ENCODE measurements at regions of chr6 and their contacts with region 1.

Region 1: DNA sequence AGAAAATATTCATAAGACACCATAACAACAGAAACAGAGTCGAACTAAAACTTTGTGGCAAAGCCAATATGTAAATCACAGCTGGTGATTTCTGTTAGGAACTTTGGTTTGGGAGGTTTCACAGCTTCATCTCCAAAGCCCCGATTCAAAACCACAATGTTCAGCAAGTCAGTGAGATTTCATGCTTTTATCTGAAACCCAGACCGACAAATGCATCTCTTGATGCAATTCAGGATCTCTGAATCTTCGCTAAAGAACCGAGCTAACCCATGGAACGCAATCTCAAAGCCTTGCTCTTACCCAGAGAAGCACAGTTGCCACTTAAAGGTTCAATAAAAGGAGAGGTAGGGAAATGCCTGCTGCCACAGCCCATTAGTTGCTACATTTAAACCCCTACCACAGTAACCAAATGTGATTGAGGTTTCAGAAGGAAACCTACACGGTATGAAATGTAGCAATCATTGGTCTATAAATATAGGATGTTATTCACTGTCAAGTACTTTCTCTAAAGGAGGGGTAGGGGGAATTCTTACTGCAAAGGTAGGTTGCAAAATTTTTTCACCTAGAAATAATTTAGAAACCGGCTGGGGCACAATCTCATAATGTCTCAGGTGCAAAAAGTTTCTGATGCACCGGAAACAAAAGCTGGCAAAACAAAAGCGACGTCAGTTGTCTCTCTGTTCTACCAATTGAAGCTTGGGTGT is 381.0 kb upstream of the ARID1B start:
- DNase-seq: peak; percentile 62
- H3K4me3 Mint-ChIP-seq: peak overlapping the region; percentile 57
- H3K27ac Mint-ChIP-seq: peak overlapping the region; percentile 77
- H3K4me1 Mint-ChIP-seq: peaks cover 82% of the 10 kb centered on the region
- H3K27me3 Mint-ChIP-seq: peaks cover 6% of the 10 kb centered on the region

Region 2: GRCh38 chr6:155188707-155189496 is 1207.3 kb before region 1 on chr6:
- CTCF ChIA-PET with region 1: no interaction called
- intact Hi-C with region 1: loop called (anchors 5 kb)
- DNase-seq: no peak
- H3K4me3 Mint-ChIP-seq: no peak overlapping the region
- H3K27ac Mint-ChIP-seq: no peak overlapping the region
- H3K4me1 Mint-ChIP-seq: peaks cover 50% of the 10 kb centered on the region
- H3K27me3 Mint-ChIP-seq: no peaks in the 10 kb centered on the region

Region 3: GRCh38 chr6:155530219-155530834 is 865.9 kb before region 1 on chr6:
- CTCF ChIA-PET with region 1: no interaction called
- intact Hi-C with region 1: loop called (anchors 10 kb)
- DNase-seq: peak; percentile 47
- H3K4me3 Mint-ChIP-seq: no peak overlapping the region
- H3K27ac Mint-ChIP-seq: no peak overlapping the region
- H3K4me1 Mint-ChIP-seq: peaks cover 22% of the 10 kb centered on the region
- H3K27me3 Mint-ChIP-seq: no peaks in the 10 kb centered on the region

Region 4: GRCh38 chr6:156191895-156192294 is 204.3 kb before region 1 on chr6:
- CTCF ChIA-PET with region 1: no interaction called
- intact Hi-C with region 1: loop called (anchors 1 kb)
- DNase-seq: no peak
- H3K4me3 Mint-ChIP-seq: peak overlapping the region; percentile 27
- H3K27ac Mint-ChIP-seq: peak overlapping the region; percentile 61
- H3K4me1 Mint-ChIP-seq: peaks cover 40% of the 10 kb centered on the region
- H3K27me3 Mint-ChIP-seq: no peaks in the 10 kb centered on the region

Region 5: GRCh38 chr6:156410649-156411048 is 14.4 kb after region 1 on chr6:
- CTCF ChIA-PET with region 1: no interaction called
- intact Hi-C with region 1: no loop called
- DNase-seq: no peak
- H3K4me3 Mint-ChIP-seq: no peak overlapping the region
- H3K27ac Mint-ChIP-seq: no peak overlapping the region
- H3K4me1 Mint-ChIP-seq: no peaks in the 10 kb centered on the region
- H3K27me3 Mint-ChIP-seq: no peaks in the 10 kb centered on the region

Region 6: DNA sequence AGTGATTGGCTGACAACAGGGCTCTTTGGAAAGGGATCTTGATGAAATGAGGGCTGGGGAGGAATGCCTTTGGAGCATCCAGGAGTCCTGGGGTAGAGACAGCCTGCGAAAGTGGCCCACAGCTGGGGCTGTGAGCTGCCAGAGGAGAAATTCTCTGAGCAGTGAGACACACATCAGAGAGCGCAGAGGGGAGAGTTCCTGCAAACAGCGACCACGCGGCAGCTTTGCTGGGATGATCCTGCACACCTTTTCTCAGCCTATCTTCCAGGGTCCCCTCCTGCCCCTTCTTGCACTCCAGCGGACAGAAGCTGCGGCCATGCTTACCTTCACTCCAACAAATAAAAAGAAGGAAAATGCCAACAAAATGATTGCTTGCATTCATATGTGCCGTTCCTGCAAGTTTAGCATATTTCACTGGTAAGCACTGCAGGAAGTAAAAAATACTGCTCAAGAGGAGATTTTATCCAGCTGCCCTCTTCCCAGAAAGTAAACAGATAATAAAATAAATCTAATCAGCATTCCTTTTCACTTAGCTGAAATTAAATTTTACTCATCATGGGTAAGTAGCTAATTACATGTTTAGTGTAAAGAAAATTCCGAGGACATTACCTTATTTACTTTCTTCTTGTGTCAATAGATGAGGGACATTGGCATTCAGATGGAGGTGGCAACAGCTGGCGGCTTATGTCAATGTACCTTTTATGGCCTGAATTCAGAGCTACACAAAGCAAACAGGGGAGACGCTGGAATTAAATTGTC is 41.1 kb after region 1 on chr6:
- CTCF ChIA-PET with region 1: no interaction called
- intact Hi-C with region 1: no loop called
- DNase-seq: no peak
- H3K4me3 Mint-ChIP-seq: no peak overlapping the region
- H3K27ac Mint-ChIP-seq: no peak overlapping the region
- H3K4me1 Mint-ChIP-seq: no peaks in the 10 kb centered on the region
- H3K27me3 Mint-ChIP-seq: no peaks in the 10 kb centered on the region

Region 7: GRCh38 chr6:156471000-156471399 is 74.8 kb after region 1 on chr6:
- CTCF ChIA-PET with region 1: no interaction called
- intact Hi-C with region 1: no loop called
- DNase-seq: no peak
- H3K4me3 Mint-ChIP-seq: no peak overlapping the region
- H3K27ac Mint-ChIP-seq: no peak overlapping the region
- H3K4me1 Mint-ChIP-seq: peaks cover 8% of the 10 kb centered on the region
- H3K27me3 Mint-ChIP-seq: no peaks in the 10 kb centered on the region

Region 8: DNA sequence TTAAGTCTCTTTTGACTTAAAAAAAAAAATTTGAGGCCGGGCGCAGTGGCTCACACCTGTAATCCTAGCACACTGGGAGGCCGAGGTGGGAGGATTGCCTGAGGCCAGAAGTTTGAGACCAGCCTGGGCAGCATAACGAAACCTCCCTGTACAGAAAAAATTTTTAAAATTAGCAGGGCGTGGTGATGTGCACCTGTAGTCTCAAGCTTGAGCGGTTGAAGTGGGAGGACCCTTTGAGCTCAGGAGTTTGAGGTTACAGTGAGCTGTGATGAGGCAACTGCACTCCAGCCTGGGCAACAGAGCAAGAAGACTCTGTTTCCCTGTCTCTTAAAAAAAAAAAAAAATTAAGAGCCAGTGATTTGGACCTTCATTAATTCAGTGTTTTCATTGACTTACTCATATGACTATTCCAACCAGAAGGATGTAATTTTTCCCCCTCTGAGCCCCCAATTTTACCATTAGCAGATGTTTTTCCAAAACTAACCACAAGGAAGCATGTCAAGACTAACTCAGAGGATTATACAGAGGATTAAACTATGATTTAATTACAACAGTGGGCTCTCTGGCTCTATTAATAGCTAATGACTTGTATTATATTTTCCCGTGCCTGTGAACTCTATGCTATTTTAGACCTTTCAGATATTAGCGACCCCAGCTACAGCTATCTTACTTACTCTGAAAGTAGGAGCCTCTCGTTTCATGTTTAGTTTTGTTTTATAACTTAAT is 456.1 kb after region 1 on chr6:
- CTCF ChIA-PET with region 1: no interaction called
- intact Hi-C with region 1: loop called (anchors 10 kb)
- DNase-seq: no peak
- H3K4me3 Mint-ChIP-seq: no peak overlapping the region
- H3K27ac Mint-ChIP-seq: no peak overlapping the region
- H3K4me1 Mint-ChIP-seq: peaks cover 83% of the 10 kb centered on the region
- H3K27me3 Mint-ChIP-seq: no peaks in the 10 kb centered on the region

Region 9: DNA sequence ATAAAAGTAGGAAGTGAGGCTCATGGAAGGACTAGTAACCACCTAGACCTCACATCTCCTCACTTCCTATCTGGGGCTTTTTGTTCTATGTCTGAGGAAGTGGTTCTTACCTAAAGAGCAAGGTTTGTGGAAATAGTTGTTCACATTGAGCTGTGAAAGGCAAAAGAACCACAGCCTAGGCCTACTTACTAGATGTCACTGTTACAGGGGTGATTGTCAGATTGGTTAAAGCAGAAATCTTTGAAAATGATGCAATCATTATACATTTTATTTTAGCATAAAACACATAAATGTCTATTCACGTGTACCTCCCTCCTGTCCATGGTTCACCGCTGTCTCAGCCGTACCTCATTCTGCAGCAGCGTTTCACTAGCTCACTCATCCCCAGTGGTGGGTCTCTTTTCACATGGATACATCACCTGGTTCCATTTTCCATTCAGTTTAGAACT is 658.3 kb after region 1 on chr6:
- CTCF ChIA-PET with region 1: no interaction called
- intact Hi-C with region 1: loop called (anchors 2 kb)
- DNase-seq: peak; percentile 67
- H3K4me3 Mint-ChIP-seq: peak overlapping the region; percentile 29
- H3K27ac Mint-ChIP-seq: peak overlapping the region; percentile 94
- H3K4me1 Mint-ChIP-seq: peaks cover 43% of the 10 kb centered on the region
- H3K27me3 Mint-ChIP-seq: no peaks in the 10 kb centered on the region